Activated CD4-positive, alpha-beta memory T cell treated with anti-CD3 and anti-CD28 coated beads for 36 hours (primary cell): ENCODE measurements at regions of chr22 and their contacts with region 1.

Region 1: DNA sequence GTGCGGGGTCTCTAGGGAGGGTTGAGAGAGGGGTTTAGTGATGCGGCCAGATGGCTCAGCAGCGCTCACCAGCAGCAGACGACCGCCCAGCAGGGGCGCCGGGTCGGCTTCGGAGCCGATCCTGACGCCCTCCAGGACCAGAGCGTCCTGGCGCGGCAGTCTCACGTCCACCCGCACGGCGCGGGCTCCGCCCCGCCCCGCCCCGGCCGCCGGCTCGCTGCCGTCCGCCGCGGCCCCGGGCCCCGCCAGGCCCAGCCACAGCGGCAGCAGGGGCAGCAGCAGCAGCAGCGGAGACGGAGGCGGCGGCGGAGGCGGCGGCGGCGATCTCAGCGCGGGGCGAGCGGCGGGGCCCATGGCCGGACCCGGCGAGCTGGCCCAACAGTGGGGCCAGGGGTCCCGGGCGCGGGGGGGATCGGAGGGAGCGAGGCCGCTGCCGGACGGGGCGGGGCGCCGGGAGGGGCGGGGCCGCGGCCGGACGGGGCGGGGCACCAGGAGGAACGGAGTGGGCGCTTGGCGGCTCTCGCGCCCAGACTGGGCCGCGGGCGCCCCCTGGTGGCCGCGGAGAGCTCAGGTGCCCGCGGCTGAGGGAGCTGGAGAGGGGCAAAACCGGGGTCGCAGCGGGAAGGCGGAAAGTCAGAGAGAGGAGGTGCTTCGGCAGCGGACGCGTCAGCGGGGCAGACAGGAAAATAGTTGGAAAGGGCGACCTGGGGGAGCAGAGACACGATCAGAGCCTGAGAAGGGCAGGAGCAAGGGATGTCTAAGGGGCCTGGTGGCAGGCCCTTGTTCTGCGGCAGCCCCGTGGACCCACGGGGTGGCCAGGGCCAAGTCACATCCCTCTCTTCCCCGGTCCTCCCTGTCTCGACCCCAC is at the start of gene RNF215:
- DNase-seq: peak; percentile 84
- H3K4me3 Mint-ChIP-seq: peak within 1 kb of the TSS; percentile 80
- H3K27ac Mint-ChIP-seq: peak within 1 kb of the TSS; percentile 39
- H3K4me1 Mint-ChIP-seq: peaks cover 24% of the 10 kb centered on the region
- H3K27me3 Mint-ChIP-seq: peaks cover 1% of the 10 kb centered on the region
- total RNA-seq, gene RNF215: 8.8 to 10.2 TPM

Region 2: DNA sequence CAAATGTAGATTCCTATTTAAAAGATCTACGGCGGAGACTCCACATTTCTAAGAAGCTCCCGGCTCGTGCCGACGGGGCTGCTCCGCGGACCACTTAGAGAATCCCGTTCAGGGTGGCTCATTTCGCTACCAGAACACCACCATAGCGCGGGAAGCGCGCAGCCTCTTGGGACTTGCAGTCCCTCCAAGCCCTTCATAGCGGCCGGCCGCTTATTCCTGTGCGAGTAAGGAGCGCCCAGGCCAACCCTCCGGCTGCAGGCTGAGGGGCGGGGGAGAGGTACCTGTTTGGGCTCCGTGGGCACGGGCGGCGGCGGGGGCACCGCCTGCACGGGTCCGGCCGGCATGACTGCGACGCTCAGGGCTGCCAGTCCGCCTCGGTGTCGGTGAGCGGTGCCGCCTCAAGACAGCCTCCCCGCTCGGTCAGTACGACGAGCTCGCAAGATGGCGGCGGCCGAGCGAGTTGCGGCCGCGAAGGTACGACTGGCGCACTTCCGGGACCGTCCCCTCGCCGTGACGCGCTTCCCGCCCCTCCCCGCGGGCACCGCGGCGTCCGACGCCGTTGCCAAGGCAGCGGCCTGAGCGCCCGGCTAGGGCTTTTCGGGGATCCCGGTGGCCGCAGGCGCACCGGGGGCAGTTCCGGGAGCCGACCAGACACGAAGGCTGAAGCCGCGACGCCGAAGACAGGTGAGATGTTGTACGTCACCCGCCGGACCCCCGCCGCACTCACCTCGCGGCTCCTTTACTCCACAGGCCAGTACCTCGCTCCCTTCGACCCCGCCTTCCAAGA is 30.6 kb before region 1 on chr22 and contains the starts of genes CCDC157 and SF3A1:
- CTCF ChIA-PET with region 1: interaction called, 13 read pairs
- POLR2A ChIA-PET with region 1: interaction called, 3 read pairs
- intact Hi-C with region 1: no loop called
- DNase-seq: peak; percentile 91
- H3K4me3 Mint-ChIP-seq: peak within 1 kb of the TSS; percentile 93
- H3K27ac Mint-ChIP-seq: peak within 1 kb of the TSS; percentile 85
- H3K4me1 Mint-ChIP-seq: peaks cover 48% of the 10 kb centered on the region
- H3K27me3 Mint-ChIP-seq: no peaks in the 10 kb centered on the region
- total RNA-seq, gene CCDC157: 2.1 to 2.9 TPM
- total RNA-seq, gene SF3A1: 255 to 273 TPM

Region 3: GRCh38 chr22:30368431-30368830 is 18.8 kb before region 1 on chr22:
- CTCF ChIA-PET with region 1: interaction called, 11 read pairs
- POLR2A ChIA-PET with region 1: no interaction called
- intact Hi-C with region 1: no loop called
- DNase-seq: no peak
- H3K4me3 Mint-ChIP-seq: no peak overlapping the region
- H3K27ac Mint-ChIP-seq: no peak overlapping the region
- H3K4me1 Mint-ChIP-seq: no peaks in the 10 kb centered on the region
- H3K27me3 Mint-ChIP-seq: no peaks in the 10 kb centered on the region

Region 4: DNA sequence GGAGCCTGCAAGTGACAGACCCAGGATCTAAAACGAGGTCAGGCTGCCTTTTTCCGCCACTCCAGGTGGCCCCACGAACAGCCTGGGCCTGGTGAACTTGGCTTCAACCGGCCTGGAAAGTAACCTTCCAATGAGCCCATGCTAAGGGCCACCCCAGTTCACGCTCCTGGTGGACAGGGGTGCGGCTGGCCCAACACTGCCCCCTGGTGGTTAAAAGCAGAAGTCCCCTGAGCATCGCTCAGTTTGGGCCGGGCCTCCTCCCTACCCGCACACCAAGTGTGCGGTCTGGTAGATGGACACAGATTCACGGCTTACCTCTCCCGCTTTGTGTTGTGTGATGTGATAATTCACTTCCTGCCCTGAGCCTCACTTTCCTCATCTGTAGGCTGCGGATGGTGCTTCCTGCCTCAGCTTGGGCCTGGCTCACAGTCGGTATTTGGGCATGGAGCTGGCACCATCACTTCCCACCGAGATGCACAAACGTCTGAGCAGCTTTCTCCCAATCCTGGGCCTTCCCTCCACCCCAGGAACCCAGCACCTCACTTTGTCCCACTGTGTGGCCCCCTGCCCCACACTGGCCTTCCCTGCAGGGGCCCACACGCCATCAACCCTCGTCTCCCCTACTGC is 98.3 kb after region 1 on chr22:
- CTCF ChIA-PET with region 1: interaction called, 98 read pairs
- POLR2A ChIA-PET with region 1: no interaction called
- intact Hi-C with region 1: loop called (anchors 1 kb)
- DNase-seq: peak; percentile 83
- H3K4me3 Mint-ChIP-seq: no peak overlapping the region
- H3K27ac Mint-ChIP-seq: no peak overlapping the region
- H3K4me1 Mint-ChIP-seq: no peaks in the 10 kb centered on the region
- H3K27me3 Mint-ChIP-seq: no peaks in the 10 kb centered on the region

Region 5: GRCh38 chr22:30606455-30607299 is 219.5 kb after region 1 on chr22 and contains the start of gene TCN2:
- CTCF ChIA-PET with region 1: interaction called, 7 read pairs
- POLR2A ChIA-PET with region 1: no interaction called
- intact Hi-C with region 1: loop called (anchors 10 kb)
- DNase-seq: peak; percentile 76
- H3K4me3 Mint-ChIP-seq: peak within 1 kb of the TSS; percentile 74
- H3K27ac Mint-ChIP-seq: peak within 1 kb of the TSS; percentile 54
- H3K4me1 Mint-ChIP-seq: peaks cover 33% of the 10 kb centered on the region
- H3K27me3 Mint-ChIP-seq: peaks cover 1% of the 10 kb centered on the region
- total RNA-seq, gene TCN2: 0.19 to 0.31 TPM